ENCODE measurements at regions of chr11 and their contacts with region 1.

Region 1: DNA sequence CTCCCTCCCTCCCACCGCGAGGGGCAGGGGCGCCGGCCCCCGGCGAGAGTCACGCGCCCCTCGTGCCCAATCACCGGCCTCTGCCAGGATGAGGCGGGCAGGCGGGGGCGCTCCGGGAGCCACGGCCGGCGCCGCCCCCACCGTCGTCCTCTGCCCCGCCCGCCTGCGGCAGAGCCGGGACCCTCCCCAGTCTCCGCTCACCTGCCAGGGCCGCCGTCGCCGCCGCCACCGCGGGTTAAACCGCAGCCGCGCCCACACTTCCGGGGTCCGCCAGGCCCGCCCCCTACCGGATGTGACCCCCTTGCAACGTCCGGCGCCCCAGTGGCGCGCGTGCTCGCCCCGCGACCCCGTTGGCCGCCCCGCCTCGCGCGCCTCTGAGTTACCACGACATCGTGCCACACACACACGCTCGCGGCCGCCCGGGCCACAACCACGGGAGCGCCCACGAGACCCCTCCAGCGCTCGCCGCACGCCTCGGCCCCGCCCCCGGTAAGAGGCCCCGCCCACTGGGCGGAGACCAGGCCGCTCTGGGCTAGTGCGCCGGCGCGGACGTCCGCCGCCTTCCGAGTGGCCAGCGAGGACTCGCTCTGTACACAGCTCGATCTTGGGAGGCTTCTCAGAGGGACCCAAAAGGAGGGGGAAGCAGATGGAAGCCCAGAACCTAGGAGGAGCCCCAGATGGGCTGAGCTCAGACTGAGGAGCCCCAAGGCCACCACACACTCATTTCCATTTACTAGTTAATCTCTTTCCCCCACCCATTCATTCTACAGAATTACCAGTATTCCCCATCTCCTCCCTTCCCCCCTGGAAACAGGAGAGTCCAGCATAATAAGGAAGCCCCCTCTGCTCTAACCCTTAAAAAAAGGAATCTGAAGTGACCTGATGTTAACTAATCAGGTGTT is at the start of gene VPS37C:
- DNase-seq: peak; percentile 98
- ATAC-seq: peak; percentile 77
- H3K4me3 Mint-ChIP-seq: peak within 1 kb of the TSS; percentile 93
- H3K27ac Mint-ChIP-seq: peak within 1 kb of the TSS; percentile 97
- H3K4me1 Mint-ChIP-seq: peaks cover 65% of the 10 kb centered on the region
- H3K27me3 Mint-ChIP-seq: no peaks in the 10 kb centered on the region
- CTCF ChIP-seq: no peak
- total RNA-seq, gene VPS37C: 14.4 and 18.1 TPM in 2 replicates

Region 2: DNA sequence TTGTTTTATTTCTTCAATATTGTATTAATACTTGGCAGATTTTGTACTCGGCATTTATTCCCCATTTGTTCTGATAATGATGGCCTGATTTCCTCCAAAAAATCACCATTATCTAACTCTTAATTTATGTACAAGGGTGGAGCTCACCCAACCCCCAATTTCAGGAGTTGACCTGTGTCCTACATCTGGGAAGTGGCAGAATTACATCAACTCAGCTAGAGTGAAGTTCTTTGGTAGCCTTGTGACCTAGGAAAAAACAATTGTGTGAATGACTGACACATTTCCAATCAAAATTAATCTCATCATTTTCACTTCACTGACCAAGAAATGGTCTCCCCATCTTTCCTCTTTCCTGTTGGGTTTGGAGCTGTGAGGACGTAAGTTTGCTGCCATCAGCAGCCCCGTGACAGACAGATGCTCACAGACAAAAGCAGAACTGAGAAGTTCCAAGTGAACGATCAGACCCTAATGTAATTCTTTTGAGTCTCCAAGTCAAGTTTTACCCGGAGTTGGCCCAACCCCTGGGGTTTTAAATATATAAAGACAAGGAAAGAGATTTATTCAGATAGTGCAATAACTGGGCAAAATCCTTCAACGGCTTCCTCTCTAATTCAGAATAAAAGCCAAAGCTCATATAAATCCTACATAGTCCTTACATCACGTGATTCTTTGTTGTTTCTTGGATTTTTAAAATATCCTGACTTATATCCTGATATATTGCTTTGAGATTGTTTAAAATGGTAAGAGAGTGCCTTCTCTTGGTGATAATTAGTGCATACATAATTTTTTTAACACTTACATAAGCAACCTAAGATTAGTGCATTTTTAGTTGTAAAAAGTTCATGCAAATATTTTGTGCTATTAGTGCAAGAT is 850.8 kb before region 1 on chr11:
- CTCF ChIA-PET with region 1: no interaction called
- POLR2A ChIA-PET with region 1: no interaction called
- intact Hi-C with region 1: loop called (anchors 5 kb)
- DNase-seq: no peak
- ATAC-seq: peak; percentile 75
- H3K4me3 Mint-ChIP-seq: peak overlapping the region; percentile 58
- H3K27ac Mint-ChIP-seq: peak overlapping the region; percentile 91
- H3K4me1 Mint-ChIP-seq: peaks cover 49% of the 10 kb centered on the region
- H3K27me3 Mint-ChIP-seq: no peaks in the 10 kb centered on the region
- CTCF ChIP-seq: no peak

Region 3: GRCh38 chr11:60906132-60906972 is 255.1 kb before region 1 on chr11 and contains the start of gene PRPF19:
- CTCF ChIA-PET with region 1: no interaction called
- POLR2A ChIA-PET with region 1: interaction called, 3 read pairs
- intact Hi-C with region 1: loop called (anchors 1 kb)
- DNase-seq: peak; percentile 96
- ATAC-seq: peak; percentile 84
- H3K4me3 Mint-ChIP-seq: peak within 1 kb of the TSS; percentile 91
- H3K27ac Mint-ChIP-seq: peak within 1 kb of the TSS; percentile 97
- H3K4me1 Mint-ChIP-seq: peaks cover 74% of the 10 kb centered on the region
- H3K27me3 Mint-ChIP-seq: no peaks in the 10 kb centered on the region
- CTCF ChIP-seq: no peak
- total RNA-seq, gene PRPF19: 143 and 164 TPM in 2 replicates

Region 4: DNA sequence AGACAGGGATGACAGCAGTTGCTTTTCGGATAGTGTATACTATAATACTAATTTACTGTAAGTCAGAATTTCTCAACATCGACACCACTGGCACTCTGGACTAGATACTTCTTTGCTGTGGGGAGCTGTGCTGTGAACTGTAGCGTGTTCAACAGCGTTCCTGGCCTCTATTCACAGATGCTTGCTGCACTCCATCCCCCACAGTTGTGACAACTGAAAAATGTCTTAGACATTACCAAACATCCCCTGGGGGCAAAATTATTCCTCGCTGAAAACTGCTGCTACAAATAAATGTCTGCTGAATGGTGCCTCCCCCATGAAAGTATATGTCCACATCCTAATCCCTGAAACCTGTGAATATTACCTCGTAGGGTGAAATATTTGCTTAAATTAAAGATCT is 202.0 kb before region 1 on chr11:
- CTCF ChIA-PET with region 1: no interaction called
- POLR2A ChIA-PET with region 1: no interaction called
- intact Hi-C with region 1: no loop called
- DNase-seq: no peak
- ATAC-seq: no peak
- H3K4me3 Mint-ChIP-seq: no peak overlapping the region
- H3K27ac Mint-ChIP-seq: no peak overlapping the region
- H3K4me1 Mint-ChIP-seq: peaks cover 2% of the 10 kb centered on the region
- H3K27me3 Mint-ChIP-seq: no peaks in the 10 kb centered on the region
- CTCF ChIP-seq: no peak

Region 5: DNA sequence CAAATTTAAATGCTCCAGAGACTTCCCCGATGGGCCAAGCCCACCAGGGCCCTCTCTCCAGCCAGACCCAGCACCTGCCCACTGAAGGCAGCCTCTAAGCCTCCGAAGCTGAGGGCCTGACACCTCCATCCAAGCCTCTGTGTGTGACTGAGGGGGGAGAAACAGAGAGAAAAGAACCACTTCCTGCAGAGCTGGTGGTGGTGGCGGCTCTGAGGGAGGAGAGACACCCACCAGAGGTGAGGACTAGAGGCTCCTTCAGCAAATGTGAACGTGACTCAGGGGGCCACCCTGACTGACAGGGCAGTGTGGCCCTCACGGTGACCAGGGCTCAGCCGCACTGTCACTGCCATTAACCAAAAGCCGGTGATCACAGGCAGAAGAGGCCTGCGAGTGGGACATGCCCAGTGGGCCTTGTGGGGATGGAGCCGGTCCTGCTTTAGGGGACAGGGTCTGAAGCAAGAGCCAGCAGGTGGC is 90.2 kb before region 1 on chr11:
- CTCF ChIA-PET with region 1: no interaction called
- POLR2A ChIA-PET with region 1: interaction called, 5 read pairs
- intact Hi-C with region 1: loop called (anchors 1 kb)
- DNase-seq: no peak
- ATAC-seq: peak; percentile 59
- H3K4me3 Mint-ChIP-seq: peak overlapping the region; percentile 70
- H3K27ac Mint-ChIP-seq: peak overlapping the region; percentile 95
- H3K4me1 Mint-ChIP-seq: peaks cover 81% of the 10 kb centered on the region
- H3K27me3 Mint-ChIP-seq: no peaks in the 10 kb centered on the region
- CTCF ChIP-seq: no peak

Region 6: DNA sequence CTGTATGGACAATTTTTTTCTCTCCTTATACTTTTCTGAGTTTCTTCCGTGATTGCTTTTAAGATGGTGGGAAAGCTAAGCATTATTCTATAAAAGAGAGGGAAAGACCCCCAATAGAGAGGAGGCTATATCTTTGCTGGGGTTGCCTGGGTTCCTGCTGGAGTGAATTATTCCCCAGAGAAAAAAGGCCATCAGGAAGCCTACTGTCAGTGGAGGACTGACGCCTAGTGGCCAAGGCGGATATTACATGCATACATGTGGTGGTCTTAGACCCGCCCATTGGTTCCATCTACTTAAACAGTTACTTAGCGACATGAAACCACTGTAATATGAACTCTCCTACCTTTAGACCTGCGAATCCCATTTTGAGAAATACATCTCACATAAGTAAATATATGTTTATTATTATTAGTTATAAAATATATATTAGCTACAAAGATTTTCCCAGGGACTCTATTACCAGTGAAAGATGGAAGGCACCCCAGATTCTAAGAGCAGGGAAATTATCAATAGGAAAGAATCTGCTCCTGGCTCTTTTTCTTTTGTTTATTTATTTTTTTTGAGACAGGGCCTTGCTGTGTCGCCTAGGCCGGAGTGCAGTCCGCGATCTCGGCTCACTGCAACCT is 26.2 kb after region 1 on chr11:
- CTCF ChIA-PET with region 1: interaction called, 5 read pairs
- POLR2A ChIA-PET with region 1: no interaction called
- intact Hi-C with region 1: loop called (anchors 1 kb)
- DNase-seq: peak; percentile 63
- ATAC-seq: peak; percentile 100
- H3K4me3 Mint-ChIP-seq: no peak overlapping the region
- H3K27ac Mint-ChIP-seq: no peak overlapping the region
- H3K4me1 Mint-ChIP-seq: peaks cover 4% of the 10 kb centered on the region
- H3K27me3 Mint-ChIP-seq: no peaks in the 10 kb centered on the region
- CTCF ChIP-seq: peak; percentile 98

Region 7: GRCh38 chr11:61429691-61430582 is 268.5 kb after region 1 on chr11 and contains the starts of genes CPSF7 and SDHAF2:
- CTCF ChIA-PET with region 1: no interaction called
- POLR2A ChIA-PET with region 1: interaction called, 3 read pairs
- intact Hi-C with region 1: loop called (anchors 5 kb)
- DNase-seq: peak; percentile 99
- ATAC-seq: peak; percentile 83
- H3K4me3 Mint-ChIP-seq: peak within 1 kb of the TSS; percentile 99
- H3K27ac Mint-ChIP-seq: peak within 1 kb of the TSS; percentile 99
- H3K4me1 Mint-ChIP-seq: peaks cover 59% of the 10 kb centered on the region
- H3K27me3 Mint-ChIP-seq: no peaks in the 10 kb centered on the region
- CTCF ChIP-seq: no peak
- total RNA-seq, gene CPSF7: 109 and 124 TPM in 2 replicates
- total RNA-seq, gene SDHAF2: 51.0 and 51.9 TPM in 2 replicates

Region 8: GRCh38 chr11:61460474-61460881 is 299.0 kb after region 1 on chr11:
- CTCF ChIA-PET with region 1: no interaction called
- POLR2A ChIA-PET with region 1: no interaction called
- intact Hi-C with region 1: no loop called
- DNase-seq: no peak
- ATAC-seq: no peak
- H3K4me3 Mint-ChIP-seq: no peak overlapping the region
- H3K27ac Mint-ChIP-seq: no peak overlapping the region
- H3K4me1 Mint-ChIP-seq: no peaks in the 10 kb centered on the region
- H3K27me3 Mint-ChIP-seq: no peaks in the 10 kb centered on the region
- CTCF ChIP-seq: no peak